Activated CD4-positive, alpha-beta T cell treated with anti-CD3 and anti-CD28 coated beads for 36 hours (primary cell): ENCODE measurements at regions of chr2 and their contacts with region 1.

Region 1: DNA sequence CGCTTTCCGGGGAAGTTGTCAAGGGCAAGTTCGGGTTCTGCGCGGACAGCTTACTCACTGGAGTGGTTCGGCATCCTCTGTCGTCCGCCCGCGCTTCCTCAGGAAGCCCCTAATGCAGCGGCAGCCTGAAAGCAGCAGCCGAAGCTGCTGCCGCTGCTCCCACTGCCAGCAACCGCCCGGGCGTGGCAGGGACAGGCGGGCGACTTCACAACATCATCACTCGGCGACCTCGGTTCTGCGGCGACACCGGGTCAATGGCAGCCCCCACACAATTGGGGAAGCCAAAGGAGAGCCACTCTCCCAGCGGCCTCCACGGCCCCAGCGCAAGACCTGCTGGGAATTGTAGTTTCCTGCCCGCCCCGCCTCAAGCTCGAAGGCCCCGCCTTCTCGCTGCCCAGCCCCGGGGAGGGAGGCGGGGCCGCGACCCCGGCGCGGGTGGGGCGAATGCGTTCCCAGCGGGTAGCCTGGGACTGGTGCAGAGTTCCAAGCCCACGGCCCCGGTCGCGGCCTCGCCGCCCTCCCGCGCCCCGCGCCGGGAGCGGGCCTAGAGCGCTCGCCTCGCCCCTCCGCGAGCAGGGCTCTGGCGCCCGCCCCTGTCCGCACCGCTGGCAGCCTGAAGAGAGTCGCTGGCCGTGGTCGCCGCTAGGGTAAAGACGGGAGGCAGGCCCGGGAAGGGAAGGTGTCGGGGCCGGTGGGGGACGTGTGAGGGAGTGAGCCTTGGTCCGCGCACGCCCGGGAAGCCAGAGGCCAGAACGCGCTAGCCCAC is at the starts of genes STRADB and TRAK2:
- DNase-seq: peak; percentile 98
- ATAC-seq: peak; percentile 91
- H3K4me3 Mint-ChIP-seq: peak within 1 kb of the TSS; percentile 95
- H3K27ac Mint-ChIP-seq: peak within 1 kb of the TSS; percentile 97
- H3K4me1 Mint-ChIP-seq: peaks cover 44% of the 10 kb centered on the region
- H3K27me3 Mint-ChIP-seq: no peaks in the 10 kb centered on the region
- total RNA-seq, gene STRADB: 20.5 to 21.8 TPM
- total RNA-seq, gene TRAK2: 22.5 to 25.6 TPM

Region 2: DNA sequence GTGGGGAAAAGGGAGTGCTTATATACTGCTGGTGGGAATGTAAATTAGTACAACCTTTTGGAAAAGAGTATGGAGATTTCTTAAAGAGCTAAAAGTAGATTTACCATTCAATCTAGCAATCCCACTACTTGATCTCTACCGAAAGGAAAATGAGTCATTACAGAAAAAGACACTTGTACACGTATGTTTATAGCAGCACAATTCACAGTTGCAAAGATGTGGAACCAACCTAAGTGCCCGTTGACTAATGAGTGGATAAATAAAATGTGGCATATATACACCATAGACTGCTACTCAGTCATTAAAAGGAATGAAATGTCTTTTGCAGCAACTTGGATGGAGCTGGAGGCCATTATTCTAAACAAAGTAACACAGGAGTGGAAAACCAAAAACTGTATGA is 123.8 kb before region 1 on chr2:
- CTCF ChIA-PET with region 1: no interaction called
- POLR2A ChIA-PET with region 1: no interaction called
- intact Hi-C with region 1: no loop called
- DNase-seq: no peak
- ATAC-seq: peak; percentile 44
- H3K4me3 Mint-ChIP-seq: no peak overlapping the region
- H3K27ac Mint-ChIP-seq: no peak overlapping the region
- H3K4me1 Mint-ChIP-seq: peaks cover 13% of the 10 kb centered on the region
- H3K27me3 Mint-ChIP-seq: no peaks in the 10 kb centered on the region

Region 3: GRCh38 chr2:201414099-201415023 is 37.1 kb before region 1 on chr2:
- CTCF ChIA-PET with region 1: interaction called, 3 read pairs
- POLR2A ChIA-PET with region 1: no interaction called
- intact Hi-C with region 1: loop called (anchors 2 kb)
- DNase-seq: no peak
- ATAC-seq: peak; percentile 82
- H3K4me3 Mint-ChIP-seq: no peak overlapping the region
- H3K27ac Mint-ChIP-seq: no peak overlapping the region
- H3K4me1 Mint-ChIP-seq: peaks cover 20% of the 10 kb centered on the region
- H3K27me3 Mint-ChIP-seq: no peaks in the 10 kb centered on the region

Region 4: GRCh38 chr2:201532686-201533304 is 81.3 kb after region 1 on chr2:
- CTCF ChIA-PET with region 1: no interaction called
- POLR2A ChIA-PET with region 1: no interaction called
- intact Hi-C with region 1: loop called in 1 of 2 experiments (anchors 2 kb)
- DNase-seq: peak; percentile 31
- ATAC-seq: peak; percentile 97
- H3K4me3 Mint-ChIP-seq: no peak overlapping the region
- H3K27ac Mint-ChIP-seq: peak overlapping the region; percentile 64
- H3K4me1 Mint-ChIP-seq: peaks cover 18% of the 10 kb centered on the region
- H3K27me3 Mint-ChIP-seq: no peaks in the 10 kb centered on the region

Region 5: DNA sequence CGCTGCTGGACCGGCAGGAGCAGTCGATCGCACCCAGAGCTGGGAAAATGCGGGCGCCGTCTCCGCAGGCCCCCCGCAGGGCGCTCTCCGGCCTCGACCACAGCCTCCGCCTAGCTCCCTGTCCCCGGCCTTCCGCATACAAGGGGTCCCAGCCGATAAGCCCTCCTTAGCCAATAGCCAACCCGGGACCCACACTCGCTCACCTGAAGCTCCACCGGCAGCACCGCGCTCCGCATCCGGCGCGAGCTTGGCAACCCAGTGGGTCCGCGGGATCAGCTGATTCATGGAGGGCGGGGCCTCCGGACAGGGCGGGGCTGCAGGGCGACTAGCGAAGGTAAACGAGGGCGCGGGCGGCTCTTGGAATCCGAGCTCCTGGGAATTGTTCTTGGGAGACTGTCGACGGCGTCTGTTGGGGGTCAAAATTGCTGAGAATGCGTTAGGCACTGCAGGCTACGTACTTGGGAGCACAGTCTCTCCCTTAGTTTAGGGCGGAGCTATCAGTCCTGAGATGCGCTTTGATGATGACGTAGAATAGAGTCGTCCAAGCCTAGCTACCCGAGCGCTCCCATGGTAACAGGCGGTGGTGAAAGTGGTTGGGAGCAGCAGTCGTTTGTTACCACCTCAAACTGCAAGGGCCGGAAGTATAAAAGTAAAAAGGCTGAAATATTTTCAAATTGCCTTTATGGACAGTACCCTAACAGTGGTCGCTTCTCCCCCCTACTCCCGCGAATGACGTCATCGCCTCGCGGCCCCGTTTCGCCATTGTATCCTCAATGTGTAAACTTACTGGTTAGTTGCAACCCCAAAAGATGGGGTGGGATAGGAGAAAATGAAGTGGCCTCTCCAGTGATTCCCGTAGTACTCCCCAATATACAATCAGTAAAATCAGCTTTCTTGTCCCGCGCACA is 329.5 kb after region 1 on chr2 and contains the start of gene ALS2:
- CTCF ChIA-PET with region 1: no interaction called
- POLR2A ChIA-PET with region 1: interaction called, 5 read pairs
- intact Hi-C with region 1: loop called (anchors 1 to 10 kb)
- DNase-seq: peak; percentile 96
- ATAC-seq: peak; percentile 95
- H3K4me3 Mint-ChIP-seq: peak within 1 kb of the TSS; percentile 84
- H3K27ac Mint-ChIP-seq: peak within 1 kb of the TSS; percentile 92
- H3K4me1 Mint-ChIP-seq: peaks cover 25% of the 10 kb centered on the region
- H3K27me3 Mint-ChIP-seq: peaks cover 7% of the 10 kb centered on the region
- total RNA-seq, gene ALS2: 12.3 to 12.4 TPM